Activated CD4-positive, alpha-beta memory T cell treated with anti-CD3 and anti-CD28 coated beads, Interleukin-2, amount 10 ng/mL, durations not matched to agents 7 days and 5 days (primary cell): ENCODE measurements at regions of chr5 and their contacts with region 1.

Region 1: DNA sequence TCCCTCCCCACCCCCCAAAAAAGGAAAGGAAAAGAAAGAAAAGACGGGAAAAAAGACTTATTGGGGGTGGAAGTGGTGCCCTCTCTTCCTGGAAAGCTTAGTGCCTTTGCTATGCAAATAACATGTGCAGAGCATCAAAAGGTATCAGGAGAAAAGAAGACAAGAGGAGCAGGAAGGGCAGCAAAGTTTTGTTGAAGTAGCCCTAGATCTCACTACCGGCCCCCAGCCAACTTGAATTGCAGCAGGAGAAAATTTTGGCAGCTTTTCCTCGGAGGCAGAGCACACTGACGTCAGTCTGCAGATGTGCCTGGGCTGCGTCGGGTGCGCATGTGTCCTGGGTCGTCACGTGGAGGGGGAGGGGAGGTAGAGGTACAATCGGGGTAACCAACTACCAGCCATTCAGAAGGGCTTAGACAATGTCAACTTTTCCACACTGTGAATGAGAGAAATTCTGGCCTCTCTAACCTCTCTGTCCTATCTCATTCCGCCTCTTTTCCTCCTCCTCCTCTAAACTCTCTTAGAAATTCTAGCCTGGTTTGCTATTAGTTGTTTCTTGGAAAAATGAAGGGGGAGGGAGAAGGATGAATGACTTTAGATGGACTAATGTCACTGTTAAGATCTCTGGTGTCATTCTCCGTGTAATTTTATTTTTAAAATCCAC is at the start of gene ADAMTS6:
- DNase-seq: peak; percentile 78
- H3K4me3 Mint-ChIP-seq: no peak within 1 kb of the TSS
- H3K27ac Mint-ChIP-seq: peak within 1 kb of the TSS; percentile 61
- H3K4me1 Mint-ChIP-seq: peaks cover 15% of the 10 kb centered on the region
- H3K27me3 Mint-ChIP-seq: no peaks in the 10 kb centered on the region
- total RNA-seq, gene ADAMTS6: 1.6 to 1.7 TPM

Region 2: DNA sequence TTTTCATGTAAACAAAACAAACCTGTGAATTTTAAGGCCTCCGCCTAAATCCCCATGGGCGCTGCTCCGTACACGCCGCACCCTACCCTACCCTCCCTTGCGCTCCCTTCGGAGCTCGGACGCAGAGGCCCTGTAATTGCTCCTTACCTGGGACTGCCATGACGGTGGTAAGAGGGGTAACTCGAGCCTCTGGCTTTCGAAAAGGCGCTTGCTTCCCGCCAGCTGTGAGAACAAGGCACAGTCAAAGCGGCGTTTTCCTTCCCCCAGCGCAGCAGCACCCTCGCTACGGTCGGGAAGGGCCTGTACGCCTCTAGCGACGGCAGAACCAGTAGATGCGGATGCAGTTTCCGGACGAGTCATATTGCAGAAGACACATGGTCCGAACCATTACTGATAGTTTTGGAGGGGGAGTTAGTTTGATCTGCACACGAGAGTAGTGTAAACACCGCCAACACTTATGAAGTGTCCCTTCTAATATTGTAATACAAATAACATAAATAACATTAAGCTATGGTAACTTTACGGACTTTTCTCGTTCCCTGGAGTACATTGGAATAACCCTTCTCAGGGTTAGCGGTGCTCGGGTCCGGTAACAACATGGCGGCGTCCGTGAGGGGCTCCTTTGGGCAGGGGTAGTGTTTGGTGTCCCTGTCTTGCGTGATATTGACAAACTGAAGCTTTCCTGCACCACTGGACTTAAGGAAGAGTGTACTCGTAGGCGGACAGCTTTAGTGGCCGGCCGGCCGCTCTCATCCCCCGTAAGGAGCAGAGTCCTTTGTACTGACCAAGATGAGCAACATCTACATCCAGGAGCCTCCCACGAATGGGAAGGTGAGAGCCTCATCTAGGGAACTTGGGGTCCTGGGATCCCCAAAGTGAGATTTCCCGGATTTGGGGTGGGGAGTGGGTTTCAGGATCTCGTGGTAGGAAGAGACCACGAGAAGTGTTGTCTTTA is 713.1 kb before region 1 on chr5 and contains the starts of genes CWC27 and SREK1IP1:
- CTCF ChIA-PET with region 1: interaction called, 5 read pairs
- POLR2A ChIA-PET with region 1: interaction called, 15 read pairs
- DNase-seq: peak; percentile 86
- H3K4me3 Mint-ChIP-seq: peak within 1 kb of the TSS; percentile 95
- H3K27ac Mint-ChIP-seq: peak within 1 kb of the TSS; percentile 91
- H3K4me1 Mint-ChIP-seq: peaks cover 50% of the 10 kb centered on the region
- H3K27me3 Mint-ChIP-seq: no peaks in the 10 kb centered on the region
- total RNA-seq, gene CWC27: 20.5 to 23.5 TPM
- total RNA-seq, gene SREK1IP1: 28.1 to 30.0 TPM

Region 3: GRCh38 chr5:64958757-64959391 is 522.9 kb before region 1 on chr5:
- CTCF ChIA-PET with region 1: interaction called, 17 read pairs
- POLR2A ChIA-PET with region 1: interaction called, 3 read pairs
- DNase-seq: no peak
- H3K4me3 Mint-ChIP-seq: no peak overlapping the region
- H3K27ac Mint-ChIP-seq: no peak overlapping the region
- H3K4me1 Mint-ChIP-seq: no peaks in the 10 kb centered on the region
- H3K27me3 Mint-ChIP-seq: no peaks in the 10 kb centered on the region

Region 4: GRCh38 chr5:65076251-65076869 is 405.4 kb before region 1 on chr5:
- CTCF ChIA-PET with region 1: interaction called, 11 read pairs
- POLR2A ChIA-PET with region 1: no interaction called
- DNase-seq: peak; percentile 69
- H3K4me3 Mint-ChIP-seq: no peak overlapping the region
- H3K27ac Mint-ChIP-seq: no peak overlapping the region
- H3K4me1 Mint-ChIP-seq: peaks cover 18% of the 10 kb centered on the region
- H3K27me3 Mint-ChIP-seq: peaks cover 24% of the 10 kb centered on the region

Region 5: DNA sequence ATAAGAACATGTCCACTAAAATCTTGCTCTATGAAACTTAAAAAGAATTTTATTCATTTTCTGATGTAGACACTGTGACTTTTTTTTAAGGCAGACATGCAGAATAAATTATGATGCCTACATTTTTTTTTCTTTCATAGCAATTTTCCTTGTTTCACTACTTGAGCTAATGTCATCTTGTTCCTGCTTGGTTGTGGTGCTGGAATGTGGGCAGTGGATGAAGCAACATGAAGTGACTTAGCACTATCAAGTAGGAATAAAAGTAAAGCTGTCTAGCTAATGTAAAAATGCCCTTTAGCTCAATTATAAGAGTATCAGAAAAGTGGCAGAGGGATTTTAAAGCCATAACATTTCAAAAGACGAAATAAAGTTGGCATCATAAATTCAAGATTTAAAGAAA is 191.1 kb before region 1 on chr5:
- CTCF ChIA-PET with region 1: no interaction called
- POLR2A ChIA-PET with region 1: no interaction called
- DNase-seq: no peak
- H3K4me3 Mint-ChIP-seq: no peak overlapping the region
- H3K27ac Mint-ChIP-seq: no peak overlapping the region
- H3K4me1 Mint-ChIP-seq: no peaks in the 10 kb centered on the region
- H3K27me3 Mint-ChIP-seq: no peaks in the 10 kb centered on the region

Region 6: GRCh38 chr5:65440456-65440855 is 41.3 kb before region 1 on chr5:
- CTCF ChIA-PET with region 1: no interaction called
- POLR2A ChIA-PET with region 1: no interaction called
- DNase-seq: no peak
- H3K4me3 Mint-ChIP-seq: no peak overlapping the region
- H3K27ac Mint-ChIP-seq: no peak overlapping the region
- H3K4me1 Mint-ChIP-seq: no peaks in the 10 kb centered on the region
- H3K27me3 Mint-ChIP-seq: peaks cover 3% of the 10 kb centered on the region